Astrocyte of the cerebellum (primary cell): ENCODE measurements at regions of chr14 and their contacts with region 1.

Region 1: GRCh38 chr14:27372771-27373170 is 774.9 kb upstream of the NOVA1 start:
- DNase-seq: no peak
- H3K4me3 ChIP-seq: no peak overlapping the region
- CTCF ChIP-seq: no peak

Region 2: DNA sequence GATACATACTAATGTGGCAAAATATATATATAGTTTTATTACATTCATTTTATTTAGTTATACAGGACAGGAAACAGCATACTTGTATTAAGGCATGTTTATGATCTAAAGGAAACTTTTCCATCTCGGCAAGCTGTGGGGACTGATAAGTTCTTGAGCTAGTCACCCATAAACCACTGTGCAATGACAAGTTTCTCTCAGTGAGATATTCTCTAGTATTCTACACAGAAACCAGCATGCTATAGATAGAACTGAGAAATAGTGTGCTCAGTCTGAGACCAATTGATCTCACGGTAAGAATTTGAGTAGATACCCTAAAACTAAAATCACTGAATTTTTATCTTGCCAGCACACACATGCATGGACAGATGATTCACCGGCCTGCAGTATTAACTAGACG is 57.3 kb before region 1 on chr14:
- in situ Hi-C with region 1: no loop called
- DNase-seq: no peak
- H3K4me3 ChIP-seq: no peak overlapping the region
- CTCF ChIP-seq: no peak

Region 3: GRCh38 chr14:27410981-27411380 is 38.2 kb after region 1 on chr14:
- in situ Hi-C with region 1: no loop called
- DNase-seq: peak; percentile 78
- H3K4me3 ChIP-seq: no peak overlapping the region
- CTCF ChIP-seq: no peak

Region 4: GRCh38 chr14:27435923-27436675 is 63.3 kb after region 1 on chr14:
- in situ Hi-C with region 1: loop called (anchors 10 kb)
- DNase-seq: no peak
- H3K4me3 ChIP-seq: no peak overlapping the region
- CTCF ChIP-seq: no peak